Activated CD4-positive, alpha-beta memory T cell treated with anti-CD3 and anti-CD28 coated beads for 36 hours (primary cell): ENCODE measurements at regions of chr12 and their contacts with region 1.

Region 1: DNA sequence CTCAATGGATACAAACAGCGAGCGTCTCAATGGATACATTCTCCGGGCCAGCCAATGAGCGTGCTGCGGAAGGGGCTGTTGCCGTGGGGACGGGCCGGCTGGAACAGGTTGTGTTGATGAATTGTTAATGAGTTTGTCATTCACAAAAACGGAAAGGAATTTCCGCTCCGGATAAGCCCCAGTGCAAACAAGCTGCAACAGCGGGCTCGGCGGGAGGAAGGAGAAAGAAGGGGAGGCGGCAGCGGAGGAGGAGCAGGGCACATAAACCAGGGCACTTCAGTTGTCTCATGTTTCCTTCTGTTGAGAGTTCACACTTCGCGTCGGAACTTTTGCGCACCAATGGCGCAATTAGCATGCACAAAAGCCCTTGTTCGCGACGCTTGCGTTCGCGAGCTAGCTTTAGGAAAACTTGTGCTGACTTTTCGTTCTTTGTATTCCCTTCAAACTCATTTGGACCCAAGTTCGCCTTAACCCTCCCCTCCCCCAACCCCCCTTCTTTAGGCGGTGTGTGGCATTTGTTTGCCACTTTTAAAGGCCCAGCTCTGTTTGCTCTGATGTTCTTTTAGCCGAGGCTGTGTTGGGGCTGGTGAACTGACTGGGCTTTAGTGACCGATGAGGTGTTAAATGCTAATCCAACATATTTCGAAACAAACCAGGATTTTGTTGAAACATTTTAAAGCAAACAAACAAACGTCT is at the start of gene DUSP6:
- DNase-seq: peak; percentile 97
- H3K4me3 Mint-ChIP-seq: peak within 1 kb of the TSS; percentile 92
- H3K27ac Mint-ChIP-seq: peak within 1 kb of the TSS; percentile 96
- H3K4me1 Mint-ChIP-seq: peaks cover 36% of the 10 kb centered on the region
- H3K27me3 Mint-ChIP-seq: peaks cover 2% of the 10 kb centered on the region
- total RNA-seq, gene DUSP6: 86.7 to 87.9 TPM

Region 2: DNA sequence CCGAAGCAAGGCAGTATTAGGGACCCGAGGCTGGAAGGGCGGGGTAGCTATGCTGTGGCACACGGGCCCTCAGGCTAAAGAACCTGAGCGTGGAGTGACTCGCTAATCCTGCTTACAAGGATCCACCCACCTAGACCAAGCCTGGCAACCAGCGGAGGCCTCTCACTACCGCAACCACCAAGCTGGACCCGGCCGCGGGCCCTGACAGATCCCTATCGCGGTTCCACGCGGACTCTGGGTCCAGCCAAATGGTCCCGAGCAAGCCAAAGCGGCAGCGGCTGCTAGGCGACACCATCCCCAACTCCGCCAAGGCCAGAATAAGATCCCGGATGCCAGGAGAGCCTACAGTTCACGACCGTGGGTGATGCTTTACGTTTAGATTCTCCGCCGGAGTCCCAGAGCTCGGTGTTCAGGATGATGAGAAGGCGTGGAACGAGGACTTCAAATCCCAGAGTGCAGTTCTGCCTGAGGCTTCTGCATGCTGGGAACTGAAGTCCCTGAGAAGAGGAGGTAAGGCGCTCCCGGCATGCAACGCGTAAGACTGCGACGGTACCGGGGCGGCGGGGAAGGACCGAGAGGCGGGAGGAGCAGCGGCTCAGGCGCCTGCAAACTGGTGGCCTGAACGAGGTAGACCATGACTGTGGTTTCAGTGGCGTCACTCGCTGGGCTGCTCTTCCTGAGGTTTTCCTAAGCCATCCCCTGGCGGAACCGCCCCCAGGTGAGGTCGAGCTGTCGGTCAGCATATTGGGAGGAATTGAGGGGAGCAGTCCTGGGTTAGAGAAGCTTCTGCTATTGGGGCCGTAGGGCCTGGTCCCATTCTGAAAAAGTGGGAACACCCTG is 1210.7 kb before region 1 on chr12 and contains the starts of genes CEP290 and TMTC3:
- CTCF ChIA-PET with region 1: no interaction called
- POLR2A ChIA-PET with region 1: no interaction called
- intact Hi-C with region 1: loop called (anchors 1 kb)
- DNase-seq: peak; percentile 95
- H3K4me3 Mint-ChIP-seq: peak within 1 kb of the TSS; percentile 96
- H3K27ac Mint-ChIP-seq: peak within 1 kb of the TSS; percentile 86
- H3K4me1 Mint-ChIP-seq: peaks cover 37% of the 10 kb centered on the region
- H3K27me3 Mint-ChIP-seq: no peaks in the 10 kb centered on the region
- total RNA-seq, gene CEP290: 12.8 to 13.7 TPM
- total RNA-seq, gene TMTC3: 5.3 to 6.8 TPM

Region 3: DNA sequence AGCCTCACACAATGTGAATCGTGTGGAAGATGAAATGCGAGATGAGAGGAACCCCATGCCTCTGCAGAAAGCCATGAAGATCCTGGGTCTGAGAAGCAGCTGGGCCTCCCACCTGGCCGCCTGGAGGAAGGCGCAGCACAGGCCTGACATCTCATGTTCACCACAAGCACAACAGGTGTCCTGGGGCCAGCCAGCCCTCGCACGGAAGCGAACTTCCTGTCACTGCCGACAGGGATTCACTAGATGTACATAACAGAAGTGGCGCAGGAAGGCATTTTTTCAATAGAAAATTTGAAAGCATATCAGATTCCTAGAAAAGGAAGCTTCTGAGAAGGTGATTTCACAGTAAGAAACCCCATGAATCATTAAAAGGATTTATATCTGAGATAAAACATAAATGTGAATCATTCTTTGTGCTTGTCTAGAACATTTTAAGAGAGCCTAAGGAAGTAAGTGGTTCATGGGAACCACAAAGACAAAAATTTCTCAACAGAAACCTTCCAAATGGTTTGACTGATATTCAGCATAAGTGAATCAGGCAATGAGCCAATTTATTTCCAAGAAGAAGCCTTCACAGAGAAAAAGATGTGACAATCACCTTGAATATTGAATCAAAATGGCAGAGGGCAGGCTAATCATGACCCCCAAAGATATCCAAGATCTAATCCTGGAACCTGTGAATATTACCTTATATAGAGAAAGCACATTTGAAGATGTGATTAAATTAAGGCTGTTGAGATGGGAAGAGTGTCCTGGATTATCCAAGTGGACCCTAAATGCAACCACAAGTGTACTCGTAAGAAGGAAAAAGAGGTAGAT is 312.3 kb before region 1 on chr12:
- CTCF ChIA-PET with region 1: interaction called, 15 read pairs
- POLR2A ChIA-PET with region 1: interaction called, 51 read pairs
- intact Hi-C with region 1: loop called (anchors 1 kb)
- DNase-seq: peak; percentile 93
- H3K4me3 Mint-ChIP-seq: peak overlapping the region; percentile 18
- H3K27ac Mint-ChIP-seq: peak overlapping the region; percentile 98
- H3K4me1 Mint-ChIP-seq: peaks cover 57% of the 10 kb centered on the region
- H3K27me3 Mint-ChIP-seq: peaks cover 1% of the 10 kb centered on the region

Region 4: DNA sequence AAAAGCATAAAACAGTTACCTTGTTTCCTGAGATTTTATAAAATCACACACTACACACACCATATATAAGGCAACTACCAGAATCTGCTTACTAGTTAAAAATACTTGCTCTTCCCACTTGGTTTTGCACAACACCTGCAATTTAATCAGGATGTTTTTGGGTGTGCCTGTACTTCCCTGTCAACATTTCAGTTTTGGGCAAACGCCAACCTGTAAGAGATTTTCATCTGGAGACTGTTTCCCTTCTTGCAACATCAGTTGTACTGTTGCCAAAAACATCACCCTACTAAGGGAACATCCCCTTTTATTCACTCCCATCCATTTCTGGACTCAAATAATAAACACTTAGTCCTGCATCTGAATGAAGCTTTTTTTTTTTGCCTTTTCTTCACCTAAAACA is 172.7 kb before region 1 on chr12:
- CTCF ChIA-PET with region 1: interaction called, 4 read pairs
- POLR2A ChIA-PET with region 1: interaction called, 20 read pairs
- intact Hi-C with region 1: loop called (anchors 1 kb)
- DNase-seq: no peak
- H3K4me3 Mint-ChIP-seq: no peak overlapping the region
- H3K27ac Mint-ChIP-seq: peak overlapping the region; percentile 74
- H3K4me1 Mint-ChIP-seq: peaks cover 35% of the 10 kb centered on the region
- H3K27me3 Mint-ChIP-seq: no peaks in the 10 kb centered on the region

Region 5: DNA sequence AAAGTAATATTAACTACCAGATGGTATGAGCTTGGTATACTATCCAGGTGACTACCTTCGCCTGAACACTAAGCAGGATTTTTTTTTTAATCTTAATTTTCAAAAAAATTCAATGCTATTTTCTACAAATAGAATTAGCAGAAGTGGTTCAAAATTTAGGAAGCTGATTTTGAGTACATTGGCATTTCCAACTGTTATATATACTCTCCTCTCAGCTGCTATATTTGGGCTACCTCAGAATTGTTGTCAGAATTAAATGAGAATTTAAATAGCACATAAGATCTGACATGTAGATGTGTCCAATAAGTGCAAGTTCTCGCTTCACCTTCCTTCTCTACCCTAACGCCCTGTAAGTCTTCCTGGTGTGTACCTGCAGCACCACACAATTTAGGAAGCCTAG is 83.5 kb before region 1 on chr12:
- CTCF ChIA-PET with region 1: no interaction called
- POLR2A ChIA-PET with region 1: no interaction called
- intact Hi-C with region 1: no loop called
- DNase-seq: no peak
- H3K4me3 Mint-ChIP-seq: no peak overlapping the region
- H3K27ac Mint-ChIP-seq: no peak overlapping the region
- H3K4me1 Mint-ChIP-seq: peaks cover 11% of the 10 kb centered on the region
- H3K27me3 Mint-ChIP-seq: no peaks in the 10 kb centered on the region

Region 6: GRCh38 chr12:89280833-89281538 is 71.7 kb before region 1 on chr12:
- CTCF ChIA-PET with region 1: no interaction called
- POLR2A ChIA-PET with region 1: no interaction called
- intact Hi-C with region 1: loop called (anchors 2 kb)
- DNase-seq: no peak
- H3K4me3 Mint-ChIP-seq: peak overlapping the region; percentile 30
- H3K27ac Mint-ChIP-seq: peak overlapping the region; percentile 75
- H3K4me1 Mint-ChIP-seq: peaks cover 23% of the 10 kb centered on the region
- H3K27me3 Mint-ChIP-seq: no peaks in the 10 kb centered on the region

Region 7: GRCh38 chr12:89461649-89462612 is 109.3 kb after region 1 on chr12:
- CTCF ChIA-PET with region 1: interaction called, 9 read pairs
- POLR2A ChIA-PET with region 1: interaction called, 4 read pairs
- intact Hi-C with region 1: loop called (anchors 1 kb)
- DNase-seq: no peak
- H3K4me3 Mint-ChIP-seq: peak overlapping the region; percentile 35
- H3K27ac Mint-ChIP-seq: peak overlapping the region; percentile 60
- H3K4me1 Mint-ChIP-seq: peaks cover 13% of the 10 kb centered on the region
- H3K27me3 Mint-ChIP-seq: no peaks in the 10 kb centered on the region

Region 8: GRCh38 chr12:89709157-89709994 is 356.7 kb after region 1 on chr12:
- CTCF ChIA-PET with region 1: no interaction called
- POLR2A ChIA-PET with region 1: interaction called, 3 read pairs
- intact Hi-C with region 1: loop called (anchors 1 kb)
- DNase-seq: peak; percentile 99
- H3K4me3 Mint-ChIP-seq: peak overlapping the region; percentile 81
- H3K27ac Mint-ChIP-seq: peak overlapping the region; percentile 83
- H3K4me1 Mint-ChIP-seq: peaks cover 33% of the 10 kb centered on the region
- H3K27me3 Mint-ChIP-seq: no peaks in the 10 kb centered on the region